Motor neuron (in vitro differentiated cells): ENCODE measurements at regions of chr9 and their contacts with region 1.

Region 1: GRCh38 chr9:106420511-106420944 is 442.4 kb upstream of the ZNF462 start:
- ATAC-seq: peak in 3 of 8 experiments; percentile 6 to 40 (median 27)
- H3K4me3 ChIP-seq: no peak overlapping the region
- H3K27ac ChIP-seq: no peak overlapping the region
- H3K4me1 ChIP-seq: peaks cover 4 to 7% of the 10 kb centered on the region in 2 donors

Region 2: DNA sequence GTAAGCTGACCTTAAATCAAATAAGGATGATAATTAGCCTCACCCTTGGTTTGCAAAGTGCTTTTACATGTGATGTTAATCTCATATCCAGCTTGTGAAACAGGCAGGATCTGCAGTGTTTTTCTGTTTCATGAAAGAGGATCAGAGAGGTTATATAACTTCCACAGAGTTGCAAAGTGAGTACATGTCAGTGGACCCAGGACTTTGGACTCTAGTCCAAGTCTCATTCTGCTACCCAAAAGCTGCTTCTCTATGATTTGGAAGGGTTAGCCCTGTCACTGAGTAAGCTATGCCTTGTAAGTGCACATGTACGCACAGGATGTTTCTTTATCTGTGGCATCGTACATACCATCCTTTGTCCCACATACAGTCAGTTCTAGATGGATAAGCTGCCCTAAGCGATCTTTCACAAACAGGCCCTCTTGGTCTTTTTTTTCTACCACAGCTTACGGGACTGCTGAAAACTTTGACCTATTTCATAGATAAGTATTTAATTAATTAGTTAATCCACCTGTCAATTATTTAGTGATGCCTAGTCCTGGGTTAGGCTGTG is 403.3 kb before region 1 on chr9:
- in situ Hi-C with region 1: no loop called
- ATAC-seq: no peak
- H3K4me3 ChIP-seq: no peak overlapping the region
- H3K27ac ChIP-seq: no peak overlapping the region
- H3K4me1 ChIP-seq: peaks cover 26 to 29% of the 10 kb centered on the region in 2 donors

Region 3: DNA sequence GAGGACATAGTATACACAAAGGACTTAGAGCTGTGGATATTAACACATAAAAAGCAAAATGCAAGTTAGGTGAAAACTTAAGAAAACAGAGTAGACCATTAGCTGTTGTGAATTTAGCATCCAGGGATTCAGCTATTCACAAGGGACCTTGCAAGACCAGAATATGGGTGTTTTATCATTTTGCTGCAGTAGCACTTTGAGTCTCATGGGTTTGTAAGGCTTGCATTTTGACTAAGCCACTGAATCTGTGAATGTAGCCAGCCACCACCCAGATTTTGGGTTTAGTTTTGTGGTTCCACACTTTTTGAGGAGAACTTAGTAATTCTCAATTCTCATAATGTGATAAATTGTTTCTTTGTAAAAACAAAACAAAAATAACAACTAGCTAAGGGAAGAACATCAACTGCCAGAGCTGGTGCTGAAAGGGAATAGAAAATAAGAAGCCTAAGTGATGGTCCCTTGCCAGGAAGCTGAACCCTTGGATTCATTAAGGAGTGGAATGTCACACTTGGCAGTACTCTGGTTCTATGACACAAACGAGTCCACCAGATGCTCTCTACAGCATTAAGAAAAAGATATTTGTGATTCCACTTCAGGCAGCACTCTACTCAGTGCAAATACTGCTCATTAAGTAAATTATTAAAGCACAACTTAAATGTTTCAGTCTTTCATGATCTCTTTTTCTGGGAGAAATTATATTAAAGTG is 114.9 kb before region 1 on chr9:
- in situ Hi-C with region 1: loop called in 1 of 9 experiments (anchors 25 kb)
- ATAC-seq: no peak
- H3K4me3 ChIP-seq: no peak overlapping the region
- H3K27ac ChIP-seq: no peak overlapping the region
- H3K4me1 ChIP-seq: peaks cover 7 to 18% of the 10 kb centered on the region in 2 donors

Region 4: DNA sequence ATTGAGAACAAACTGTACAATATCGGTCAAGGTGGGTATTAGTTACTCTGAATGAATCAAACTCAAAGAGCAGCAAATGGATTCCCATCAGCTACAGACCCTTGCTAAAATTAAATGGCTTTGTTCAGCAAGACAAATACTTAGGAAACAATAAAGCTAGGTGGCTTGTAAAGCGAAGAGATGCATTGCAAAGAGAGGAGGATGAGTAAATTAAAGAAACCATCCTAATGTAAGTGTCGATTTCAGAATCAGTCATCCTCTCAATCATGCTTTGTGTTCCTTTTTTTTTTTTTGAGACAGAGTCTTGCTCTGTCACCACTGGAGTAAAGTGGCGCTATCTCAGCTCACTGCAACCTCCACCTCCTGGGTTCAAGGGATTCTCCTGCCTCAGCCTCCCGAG is 83.2 kb after region 1 on chr9:
- in situ Hi-C with region 1: loop called in 1 of 9 experiments (anchors 25 kb)
- ATAC-seq: no peak
- H3K4me3 ChIP-seq: no peak overlapping the region
- H3K27ac ChIP-seq: no peak overlapping the region
- H3K4me1 ChIP-seq: no peaks in the 10 kb centered on the region